ENCODE measurements at regions of chr5 and their contacts with region 1.

Region 1: GRCh38 chr5:141811287-141812155 is 66.7 kb downstream of the PCDH1 start:
- DNase-seq: no peak
- ATAC-seq: no peak

Region 2: GRCh38 chr5:141701360-141702119 is 110.0 kb before region 1 on chr5:
- intact Hi-C with region 1: loop called (anchors 1 kb)
- DNase-seq: no peak
- ATAC-seq: no peak

Region 3: DNA sequence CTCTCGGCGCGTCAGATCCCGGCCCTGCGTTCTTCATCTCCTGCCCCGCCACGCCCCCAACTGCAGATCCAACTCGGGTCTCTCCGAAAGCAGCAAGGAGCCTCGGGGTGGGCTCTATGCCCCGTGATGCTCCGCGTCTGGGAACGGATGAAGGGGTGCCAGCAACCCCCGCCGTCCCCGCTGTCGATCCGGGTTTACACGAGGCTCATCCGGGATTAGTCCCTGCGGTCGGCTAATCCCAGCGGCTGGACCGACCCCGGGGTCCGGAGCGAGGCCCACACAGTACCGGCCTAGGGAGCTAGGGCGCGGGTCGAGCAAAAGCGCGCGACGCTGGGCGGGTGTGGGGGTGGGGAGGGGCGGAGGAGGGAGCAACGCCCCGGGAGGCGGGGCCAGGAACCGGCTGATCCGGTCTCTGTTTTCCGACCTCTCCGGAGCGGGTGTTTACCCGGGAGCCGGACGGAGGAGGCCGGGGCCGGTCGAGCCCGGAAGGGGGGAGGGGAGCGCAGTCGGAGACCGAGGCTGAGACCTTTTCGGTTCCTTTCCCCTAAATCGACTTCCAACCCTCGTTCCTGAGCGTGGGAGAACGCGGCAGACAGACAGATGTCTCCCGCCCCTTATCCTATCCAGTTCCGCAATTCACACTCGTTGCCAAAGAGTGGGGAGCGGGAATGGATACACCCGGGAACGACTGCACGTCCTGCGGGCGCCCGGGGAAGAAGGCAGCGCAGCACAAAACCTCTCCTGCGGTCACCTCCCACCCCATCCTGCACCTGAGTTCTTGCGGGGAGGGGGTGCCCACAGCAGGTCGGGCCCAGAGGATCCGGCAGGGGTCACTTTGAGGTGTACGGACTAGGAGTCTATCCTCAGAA is 38.1 kb after region 1 on chr5:
- intact Hi-C with region 1: loop called (anchors 5 kb)
- DNase-seq: peak; percentile 89
- ATAC-seq: peak; percentile 92

Region 4: DNA sequence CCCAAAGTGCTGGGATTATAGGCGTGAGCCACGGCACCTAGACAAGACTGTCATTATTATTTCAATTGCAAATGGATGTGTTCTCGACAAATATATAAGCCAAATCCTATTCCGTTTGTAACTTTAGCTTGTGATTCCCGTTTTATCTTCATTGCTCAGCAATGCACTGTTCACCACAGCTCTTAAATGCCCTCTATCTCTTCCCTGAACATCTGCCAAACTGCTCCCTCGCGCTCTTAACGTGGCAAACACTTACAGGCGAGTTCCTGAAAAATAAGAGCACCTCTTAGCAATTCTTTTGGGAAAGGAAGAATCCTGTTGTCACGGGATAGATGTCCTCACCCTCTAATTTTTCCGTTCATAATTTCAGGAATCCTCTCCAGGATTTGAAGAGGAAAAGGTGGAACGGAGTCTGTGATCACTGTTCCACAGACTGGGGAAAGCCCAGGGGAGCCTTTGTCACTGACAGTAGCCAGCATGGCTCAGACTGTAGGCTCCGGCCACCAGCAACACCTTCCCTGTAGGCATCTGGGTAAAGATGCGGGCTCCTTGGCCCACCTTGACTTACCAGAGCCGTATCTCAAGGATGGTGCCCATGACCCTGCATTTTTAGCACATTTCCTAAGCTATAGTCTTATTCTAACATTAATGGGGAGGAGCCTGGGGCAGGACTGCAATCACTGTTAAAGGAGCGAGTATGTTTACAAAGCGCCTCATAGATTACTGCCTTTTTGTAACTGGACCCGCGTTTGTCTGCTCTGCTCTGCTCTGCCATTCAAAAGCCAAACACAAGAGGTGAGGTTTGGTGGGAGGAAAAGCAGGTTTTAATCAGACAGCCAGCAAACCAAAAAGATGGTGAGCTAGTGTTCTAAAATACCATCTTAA is 221.5 kb after region 1 on chr5:
- intact Hi-C with region 1: no loop called
- DNase-seq: no peak
- ATAC-seq: no peak

Measured in Right ventricle myocardium inferior (tissue), 1 donor.